ENCODE measurements at regions of chr15 and their contacts with region 1.

Region 1: DNA sequence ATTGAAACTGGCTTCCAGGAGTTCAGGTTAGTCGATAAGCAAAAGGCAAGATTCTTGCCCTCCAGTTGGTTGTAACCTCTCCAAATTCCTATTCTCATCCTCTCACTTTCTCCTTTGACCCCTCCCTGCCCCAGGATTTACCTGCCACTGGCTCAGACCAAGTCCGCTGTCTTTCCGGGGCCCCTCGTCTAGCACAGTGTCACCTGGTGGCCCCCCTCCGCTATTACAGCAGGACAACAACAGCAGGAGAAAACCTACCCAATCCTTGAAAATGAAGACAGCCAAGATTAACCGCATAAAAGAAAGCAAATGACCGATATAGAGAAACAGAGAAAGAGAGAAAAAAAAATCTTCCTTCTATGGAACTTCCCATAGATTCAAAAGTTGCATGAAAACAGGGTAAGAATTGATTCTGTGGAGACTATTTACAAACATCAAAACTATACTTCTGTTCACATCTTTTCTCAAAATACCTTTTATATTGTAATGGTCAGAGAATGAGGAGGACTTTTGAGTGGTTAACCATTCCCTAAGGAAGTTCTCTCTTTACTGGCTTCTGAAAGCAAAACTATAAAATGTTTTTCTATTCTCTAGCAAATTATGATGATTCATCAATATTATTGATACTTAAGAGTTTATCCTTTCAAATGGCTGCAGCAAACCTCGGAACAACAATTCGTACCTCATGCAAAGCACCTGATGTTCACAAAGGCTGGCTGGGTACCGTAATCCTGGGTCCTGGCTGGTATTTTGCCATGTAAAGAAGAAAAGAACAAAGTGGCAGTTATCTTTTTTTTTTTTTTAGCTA is 10.0 kb upstream of the ST8SIA2 start:
- DNase-seq: peak in 2 of 3 donors; percentile 60 to 67
- ATAC-seq: no peak
- H3K4me3 ChIP-seq: no peak overlapping the region
- H3K27ac ChIP-seq: no peak overlapping the region
- H3K4me1 ChIP-seq: no peaks in the 10 kb centered on the region
- H3K27me3 ChIP-seq: no peaks in the 10 kb centered on the region

Region 2: GRCh38 chr15:92288755-92289154 is 95.0 kb before region 1 on chr15:
- intact Hi-C with region 1: loop called in 1 of 4 experiments (anchors 10 kb)
- DNase-seq: no peak
- ATAC-seq: no peak
- H3K4me3 ChIP-seq: no peak overlapping the region
- H3K27ac ChIP-seq: no peak overlapping the region
- H3K4me1 ChIP-seq: no peaks in the 10 kb centered on the region
- H3K27me3 ChIP-seq: no peaks in the 10 kb centered on the region